ENCODE measurements at regions of chr1 and their contacts with region 1.

Region 1: DNA sequence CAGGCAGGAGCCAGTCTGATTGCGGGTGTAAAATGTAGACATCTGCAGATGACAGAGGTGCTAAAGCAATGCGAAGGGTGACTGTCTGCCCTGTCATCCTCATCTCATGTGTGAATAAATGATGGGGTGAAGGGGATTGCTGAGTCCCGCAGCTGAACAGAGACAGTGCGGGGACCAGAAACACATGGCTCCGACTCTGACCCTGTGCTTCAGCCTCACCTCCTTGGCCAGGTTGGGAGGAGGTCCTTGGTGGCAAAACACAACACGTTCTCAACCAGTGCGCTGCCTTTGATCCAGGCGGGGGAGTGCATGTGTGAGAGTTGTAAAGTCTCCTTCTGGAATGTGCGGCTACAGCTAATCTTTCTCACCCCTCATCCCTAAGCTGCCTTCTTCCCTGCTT is 32.0 kb upstream of the TTC22 start:
- DNase-seq: no peak
- H3K4me3 ChIP-seq: no peak overlapping the region
- H3K27ac ChIP-seq: no peak overlapping the region
- H3K4me1 ChIP-seq: no peaks in the 10 kb centered on the region
- H3K27me3 ChIP-seq: no peaks in the 10 kb centered on the region
- CTCF ChIP-seq: no peak
- EP300 ChIP-seq: no peak
- POLR2A ChIP-seq: no peak

Region 2: GRCh38 chr1:53376041-53376461 is 1457.1 kb before region 1 on chr1:
- intact Hi-C with region 1: loop called in 1 of 4 experiments (anchors 5 kb)
- DNase-seq: peak in 2 of 5 donors; percentile 2 to 27
- H3K4me3 ChIP-seq: no peak overlapping the region
- H3K27ac ChIP-seq: no peak overlapping the region
- H3K4me1 ChIP-seq: no peaks in the 10 kb centered on the region
- H3K27me3 ChIP-seq: no peaks in the 10 kb centered on the region
- CTCF ChIP-seq: no peak
- EP300 ChIP-seq: no peak
- POLR2A ChIP-seq: no peak

Region 3: DNA sequence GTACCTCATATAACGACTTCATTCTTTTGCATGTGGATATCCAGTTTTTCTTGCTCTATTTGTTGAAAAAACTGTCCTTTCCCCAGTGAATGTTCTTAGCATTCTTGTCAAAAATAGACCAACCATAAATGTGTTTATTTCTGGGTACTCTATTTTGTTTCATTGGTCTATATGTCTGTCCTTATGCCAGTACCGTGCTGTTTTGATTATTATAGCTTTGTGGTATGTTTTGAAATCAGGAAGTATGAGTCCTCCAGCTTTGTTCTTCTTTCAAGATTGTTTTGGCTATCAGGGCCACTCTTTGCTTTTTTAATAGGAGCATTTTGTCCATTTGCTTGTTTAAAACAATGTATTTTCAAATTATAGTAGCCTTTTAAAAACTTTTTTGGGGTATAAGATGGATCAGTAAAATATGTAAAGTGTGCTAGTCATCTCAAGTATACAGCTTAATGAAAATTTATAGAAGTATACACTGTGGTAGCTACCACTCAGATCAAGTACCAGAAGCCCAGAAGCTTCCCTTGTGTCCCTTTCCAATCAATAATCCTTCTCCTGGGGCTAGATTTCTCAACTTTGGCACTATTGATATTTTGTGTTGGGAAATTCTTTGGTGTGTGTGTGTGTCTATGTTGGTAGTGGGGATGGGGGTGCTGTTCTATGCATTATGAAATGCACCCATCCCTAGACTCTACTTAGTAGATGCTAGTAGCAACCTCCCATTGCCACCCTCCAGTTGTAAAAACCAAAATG is 174.8 kb before region 1 on chr1:
- intact Hi-C with region 1: no loop called
- DNase-seq: no peak
- H3K4me3 ChIP-seq: no peak overlapping the region
- H3K27ac ChIP-seq: no peak overlapping the region
- H3K4me1 ChIP-seq: no peaks in the 10 kb centered on the region
- H3K27me3 ChIP-seq: no peaks in the 10 kb centered on the region
- CTCF ChIP-seq: no peak
- EP300 ChIP-seq: no peak
- POLR2A ChIP-seq: no peak

Region 4: DNA sequence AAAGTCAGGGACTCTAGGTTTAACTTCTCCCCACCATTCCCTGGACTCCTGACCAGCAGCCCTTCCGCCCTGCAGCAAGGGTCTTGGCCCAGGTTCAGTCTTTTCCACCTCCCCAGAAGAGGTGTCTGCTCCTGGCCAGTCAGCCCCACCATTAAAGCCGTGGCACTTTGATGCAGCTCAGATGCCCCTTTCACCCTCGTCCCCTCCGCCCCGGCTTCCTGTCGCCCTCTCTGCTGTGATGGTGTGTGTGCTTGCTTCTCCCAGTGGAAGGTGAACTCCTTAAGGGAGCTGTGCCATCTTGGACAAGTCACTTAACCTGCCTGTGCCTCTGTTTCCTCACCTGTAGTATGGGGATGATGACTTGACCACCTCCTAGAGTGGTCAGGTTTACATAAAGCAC is 135.2 kb before region 1 on chr1:
- intact Hi-C with region 1: no loop called
- DNase-seq: no peak
- H3K4me3 ChIP-seq: no peak overlapping the region
- H3K27ac ChIP-seq: no peak overlapping the region
- H3K4me1 ChIP-seq: no peaks in the 10 kb centered on the region
- H3K27me3 ChIP-seq: no peaks in the 10 kb centered on the region
- CTCF ChIP-seq: no peak
- EP300 ChIP-seq: no peak
- POLR2A ChIP-seq: no peak